Posterior cingulate gyrus (tissue), 11 donors: ENCODE measurements at regions of chr4 and their contacts with region 1.

Region 1: GRCh38 chr4:3106339-3107186 is 32.1 kb downstream of the HTT start:
- DNase-seq: peak; percentile 78 to 98 (median 90)

Region 2: DNA sequence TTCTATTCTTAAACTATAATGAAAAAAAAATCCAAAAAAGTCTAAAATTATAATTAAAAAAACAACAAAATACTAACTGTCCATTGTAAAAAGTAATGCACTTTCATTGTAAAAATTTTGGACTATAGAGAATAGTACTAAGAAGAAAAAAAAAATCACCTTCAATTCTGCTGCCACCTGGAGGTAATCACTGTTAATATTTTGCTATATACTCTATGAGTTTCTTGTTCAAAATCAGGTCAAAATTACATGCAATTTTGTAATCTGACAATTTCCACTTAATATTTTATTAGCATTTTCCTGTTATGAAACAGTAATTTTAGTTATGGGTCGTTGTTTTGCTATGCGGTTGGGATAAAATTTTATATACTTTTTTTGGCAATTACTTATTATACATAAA is 29.9 kb after region 1 on chr4:
- intact Hi-C with region 1: loop called (anchors 2 kb)
- DNase-seq: no peak